ENCODE measurements at regions of chr5 and their contacts with region 1.

Region 1: DNA sequence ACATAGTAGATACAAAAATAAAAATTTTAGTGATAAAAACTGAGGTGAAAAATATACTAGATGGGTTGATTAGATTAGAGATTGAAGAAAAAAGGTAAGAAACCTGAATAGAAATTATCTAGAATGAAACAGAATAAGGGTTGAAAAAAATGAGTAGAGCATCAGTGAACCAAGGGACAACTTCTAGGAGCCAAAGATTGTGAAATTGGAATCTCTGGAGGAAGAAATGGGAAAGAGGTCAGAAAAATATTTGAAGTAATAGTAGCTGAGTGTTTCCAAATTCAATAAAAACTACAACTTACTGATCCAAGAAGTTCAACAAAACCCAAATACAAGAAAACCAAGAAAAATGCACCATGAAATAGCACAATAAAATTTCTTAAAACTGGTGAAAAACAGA is 116.6 kb upstream of the STARD4 start:
- DNase-seq: no peak
- H3K4me3 Mint-ChIP-seq: no peak overlapping the region
- H3K27ac Mint-ChIP-seq: no peak overlapping the region
- H3K4me1 Mint-ChIP-seq: peaks cover 17% of the 10 kb centered on the region
- H3K27me3 Mint-ChIP-seq: no peaks in the 10 kb centered on the region

Region 2: DNA sequence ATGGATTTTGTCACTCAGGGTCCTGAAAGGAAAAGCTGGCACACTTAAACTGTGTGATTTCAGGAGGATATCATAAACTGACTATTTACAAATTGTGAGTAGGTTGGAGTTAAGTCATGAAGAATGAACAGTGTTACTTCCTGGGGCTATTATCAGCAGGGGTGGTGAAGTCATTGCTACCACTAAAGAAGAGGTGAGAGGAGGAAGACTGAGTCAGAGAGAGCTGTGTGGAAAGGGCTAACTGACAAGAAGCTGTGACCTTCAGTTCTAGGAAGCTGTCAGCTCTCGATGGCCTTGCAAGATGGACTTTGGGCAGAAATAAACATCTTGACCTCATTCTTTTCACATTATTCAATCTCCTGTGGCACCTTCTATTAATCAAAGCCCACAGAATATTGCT is 44.2 kb before region 1 on chr5:
- CTCF ChIA-PET with region 1: no interaction called
- intact Hi-C with region 1: loop called (anchors 2 kb)
- DNase-seq: peak; percentile 6
- H3K4me3 Mint-ChIP-seq: no peak overlapping the region
- H3K27ac Mint-ChIP-seq: no peak overlapping the region
- H3K4me1 Mint-ChIP-seq: peaks cover 15% of the 10 kb centered on the region
- H3K27me3 Mint-ChIP-seq: peaks cover 11% of the 10 kb centered on the region

Region 3: DNA sequence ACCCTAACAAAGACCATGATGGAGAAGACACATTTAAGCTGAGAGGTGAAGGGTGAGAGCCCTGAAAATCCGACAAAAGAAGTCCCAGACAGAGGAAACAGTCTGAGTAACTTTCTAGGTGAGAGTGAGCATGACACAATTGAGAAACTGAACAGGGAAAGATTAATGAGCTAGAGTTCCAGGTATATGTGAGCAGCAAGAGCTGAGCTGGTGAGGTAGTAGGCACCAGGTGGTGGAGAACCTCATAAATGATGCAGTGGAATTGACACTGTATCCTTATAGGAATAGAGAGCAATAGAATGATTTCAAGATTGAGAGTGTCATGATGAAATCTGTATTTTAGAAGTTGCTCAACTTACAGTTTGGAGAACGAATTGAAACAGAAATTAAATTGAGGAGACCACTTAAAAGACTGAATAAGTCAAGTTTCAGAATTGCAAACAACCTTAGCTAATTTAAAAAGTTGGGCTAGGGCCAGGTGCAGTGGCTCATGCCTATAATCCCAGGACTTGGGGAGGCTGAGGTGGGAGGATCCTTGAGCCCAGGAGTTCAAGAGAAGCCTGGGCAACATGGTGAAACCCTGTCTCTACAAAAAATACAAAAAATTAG is 38.3 kb after region 1 on chr5:
- CTCF ChIA-PET with region 1: no interaction called
- intact Hi-C with region 1: loop called (anchors 1 kb)
- DNase-seq: no peak
- H3K4me3 Mint-ChIP-seq: no peak overlapping the region
- H3K27ac Mint-ChIP-seq: no peak overlapping the region
- H3K4me1 Mint-ChIP-seq: peaks cover 4% of the 10 kb centered on the region
- H3K27me3 Mint-ChIP-seq: no peaks in the 10 kb centered on the region

Region 4: DNA sequence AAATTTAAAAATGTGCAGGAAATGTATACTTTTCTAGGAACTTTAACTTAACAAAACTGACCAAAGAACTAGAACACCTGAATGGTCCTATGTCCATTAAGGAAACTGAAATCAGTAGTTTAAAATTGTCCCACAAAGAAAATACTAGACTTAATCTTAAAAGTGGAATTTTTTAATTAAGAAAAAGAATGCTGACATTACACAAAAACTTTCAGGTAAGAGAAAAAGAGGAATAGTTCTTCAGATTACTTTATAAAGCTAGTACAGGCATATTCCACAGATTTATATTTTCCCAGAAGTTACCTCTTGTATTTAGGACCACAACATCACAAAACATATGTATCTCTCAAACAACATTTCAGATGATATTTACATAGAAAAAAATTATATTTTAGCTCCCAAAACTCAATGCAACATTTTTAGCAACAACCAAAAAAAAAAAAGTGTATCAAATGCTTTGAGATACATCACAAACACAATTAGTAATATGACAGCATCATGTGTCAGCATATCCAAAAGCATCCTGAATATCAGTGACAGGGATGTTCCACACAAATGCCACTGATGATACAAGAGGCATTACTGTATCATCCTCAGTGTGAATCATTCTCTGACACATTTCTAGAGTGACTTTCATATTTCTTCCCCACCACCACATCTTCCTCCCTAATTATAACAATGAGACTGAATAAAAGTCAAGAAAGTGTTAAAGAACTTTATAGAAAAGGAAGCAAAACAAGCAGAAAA is 526.2 kb after region 1 on chr5:
- CTCF ChIA-PET with region 1: no interaction called
- intact Hi-C with region 1: loop called (anchors 5 kb)
- DNase-seq: no peak
- H3K4me3 Mint-ChIP-seq: no peak overlapping the region
- H3K27ac Mint-ChIP-seq: no peak overlapping the region
- H3K4me1 Mint-ChIP-seq: peaks cover 19% of the 10 kb centered on the region
- H3K27me3 Mint-ChIP-seq: no peaks in the 10 kb centered on the region

Region 5: GRCh38 chr5:112355058-112355685 is 726.3 kb after region 1 on chr5:
- CTCF ChIA-PET with region 1: no interaction called
- intact Hi-C with region 1: no loop called
- DNase-seq: no peak
- H3K4me3 Mint-ChIP-seq: no peak overlapping the region
- H3K27ac Mint-ChIP-seq: no peak overlapping the region
- H3K4me1 Mint-ChIP-seq: no peaks in the 10 kb centered on the region
- H3K27me3 Mint-ChIP-seq: peaks cover 6% of the 10 kb centered on the region

Measured in activated naive CD4-positive, alpha-beta T cell treated with anti-CD3 and anti-CD28 coated beads for 36 hours (primary cell).